HEK293 (cell line): ENCODE measurements at regions of chr11 and their contacts with region 1.

Region 1: DNA sequence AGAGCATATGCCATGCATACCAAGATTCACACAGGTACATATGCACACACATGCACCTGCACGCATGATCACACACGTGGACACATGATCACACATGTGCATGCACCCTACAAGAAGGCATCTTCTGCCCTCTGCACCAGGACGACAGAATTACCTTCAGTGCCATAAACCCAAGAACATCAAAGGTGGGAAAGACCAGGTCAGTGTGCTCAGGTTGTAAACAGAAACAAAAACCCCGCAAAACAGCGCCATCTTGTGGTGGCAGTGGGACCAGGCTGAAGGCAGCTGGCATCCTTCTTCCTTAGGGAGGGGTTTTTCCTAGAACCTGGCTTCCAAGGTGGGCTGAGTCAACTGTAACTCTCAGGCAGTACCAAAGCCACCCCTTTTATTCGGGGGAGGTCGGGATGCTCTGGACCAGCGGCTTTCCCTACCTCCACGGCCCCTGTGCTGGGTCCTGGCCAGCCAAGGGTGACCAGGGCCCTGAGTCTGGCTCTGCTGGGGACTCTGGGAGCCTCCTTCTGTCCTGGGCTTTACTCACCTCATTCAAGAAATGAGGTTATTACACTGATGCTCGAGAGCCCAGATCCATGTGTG is 69.4 kb upstream of the FGF3 start:
- H3K4me3 ChIP-seq: no peak overlapping the region
- H3K27ac ChIP-seq: no peak overlapping the region
- H3K4me1 ChIP-seq: no peaks in the 10 kb centered on the region
- CTCF ChIP-seq: no peak; the same call in 1 of the 2 replicates

Region 2: DNA sequence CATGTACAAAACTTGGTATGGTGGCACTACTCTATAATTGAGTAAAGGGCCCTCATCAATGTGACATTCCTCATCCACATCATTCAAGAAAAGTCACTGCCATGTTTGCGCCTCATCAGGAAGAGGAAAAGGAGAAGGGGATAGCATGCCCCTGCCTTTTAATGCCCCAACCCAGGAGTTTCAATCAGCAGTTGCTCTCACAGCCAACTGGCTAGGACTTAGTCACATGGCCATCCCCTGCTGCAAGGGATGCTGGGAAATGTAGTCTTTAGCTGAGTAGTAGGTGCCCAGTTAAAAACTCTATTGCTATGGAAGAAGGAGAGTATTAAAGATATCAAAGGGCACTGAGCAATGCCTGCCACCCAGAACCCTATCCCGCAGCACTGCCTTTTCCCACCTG is 258.6 kb before region 1 on chr11:
- CTCF ChIA-PET with region 1: no interaction called
- POLR2A ChIA-PET with region 1: no interaction called
- H3K4me3 ChIP-seq: no peak overlapping the region
- H3K27ac ChIP-seq: no peak overlapping the region
- H3K4me1 ChIP-seq: no peaks in the 10 kb centered on the region
- CTCF ChIP-seq: no peak

Region 3: DNA sequence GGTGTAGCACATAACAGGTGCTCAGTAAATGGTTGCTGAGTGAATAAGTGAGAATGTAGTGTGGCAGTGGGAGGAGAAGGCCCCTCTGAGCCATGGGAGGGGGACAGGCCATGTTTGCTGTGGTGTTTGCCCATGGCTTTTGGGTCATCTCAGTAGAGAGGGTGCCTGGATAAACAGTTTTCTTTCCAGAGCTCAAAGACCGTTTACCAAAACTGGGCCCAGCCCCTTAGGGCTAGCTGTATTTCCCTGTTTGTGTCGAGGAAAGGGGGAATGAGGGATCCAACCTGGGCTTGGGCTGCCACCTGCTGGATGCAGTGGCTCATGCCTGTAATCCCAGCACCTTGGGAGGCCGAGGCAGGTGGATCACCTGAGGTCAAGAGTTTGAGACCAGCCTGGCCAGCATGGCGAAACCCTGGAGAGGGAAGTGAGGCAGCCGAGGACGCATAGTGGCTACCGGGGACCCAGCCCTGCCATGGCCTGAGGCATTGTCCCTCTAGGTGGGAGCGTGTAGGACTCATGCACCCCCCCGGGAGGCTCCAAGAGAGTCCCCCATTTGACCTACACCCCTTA is 204.7 kb before region 1 on chr11:
- CTCF ChIA-PET with region 1: interaction called, 20 read pairs
- POLR2A ChIA-PET with region 1: no interaction called
- H3K4me3 ChIP-seq: no peak overlapping the region
- H3K27ac ChIP-seq: no peak overlapping the region
- H3K4me1 ChIP-seq: no peaks in the 10 kb centered on the region
- CTCF ChIP-seq: peak; percentile 55; the same call in 1 of the 2 replicates

Region 4: GRCh38 chr11:69704508-69705253 is 183.9 kb before region 1 on chr11:
- CTCF ChIA-PET with region 1: interaction called, 13 read pairs
- POLR2A ChIA-PET with region 1: no interaction called
- H3K4me3 ChIP-seq: peak overlapping the region; percentile 30
- H3K27ac ChIP-seq: no peak overlapping the region
- H3K4me1 ChIP-seq: 0 out of 2 replicates have a peak, but pooled peaks cover 6% of the 10 kb centered on the region
- CTCF ChIP-seq: no peak; the same call in 1 of the 2 replicates

Region 5: DNA sequence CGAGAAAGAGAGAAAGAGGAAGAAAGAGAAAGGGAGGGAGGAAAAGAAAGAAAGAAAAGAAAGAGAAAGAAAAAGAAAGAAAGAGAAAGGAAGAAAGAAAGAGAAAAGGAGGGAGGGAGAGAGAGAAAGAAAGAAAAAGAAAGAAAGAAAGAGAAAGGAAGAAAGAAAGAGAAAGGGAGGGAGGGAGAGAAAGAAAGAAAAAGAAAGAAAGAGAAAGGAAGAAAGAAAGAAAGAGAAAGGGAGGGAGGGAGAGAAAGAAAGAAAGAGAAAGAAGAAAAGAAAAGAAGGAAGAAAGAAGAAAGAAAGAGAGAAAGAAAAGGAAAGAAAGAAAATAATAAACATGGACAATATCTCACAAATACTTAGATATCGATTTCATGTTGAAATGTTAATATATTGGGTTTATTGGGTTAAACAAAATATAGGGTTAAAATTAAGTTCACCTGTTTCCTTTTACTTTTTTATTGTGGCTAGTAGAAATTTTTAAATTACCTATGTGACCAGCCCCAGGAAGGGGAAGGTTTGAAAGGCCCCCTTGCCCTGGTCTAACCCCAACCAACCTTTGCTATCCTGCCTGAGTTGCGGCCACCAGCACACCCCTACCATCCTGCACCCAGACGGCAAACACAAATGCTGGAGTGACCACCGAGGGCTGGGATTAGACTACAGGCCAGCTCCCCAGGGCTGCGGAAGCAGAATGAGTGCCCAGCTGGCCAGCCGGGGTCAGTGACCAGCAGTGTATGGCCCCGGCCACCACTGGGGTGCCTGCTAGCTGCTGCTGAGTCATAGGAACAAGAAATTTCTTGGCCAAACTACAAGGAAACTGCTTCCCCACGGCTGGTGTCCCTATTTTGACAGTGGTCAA is 11.6 kb after region 1 on chr11:
- CTCF ChIA-PET with region 1: interaction called, 18 read pairs
- POLR2A ChIA-PET with region 1: no interaction called
- H3K4me3 ChIP-seq: no peak overlapping the region
- H3K27ac ChIP-seq: no peak overlapping the region
- H3K4me1 ChIP-seq: no peaks in the 10 kb centered on the region
- CTCF ChIP-seq: no peak